Naive thymus-derived CD4-positive, alpha-beta T cell (primary cell): ENCODE measurements at regions of chr4 and their contacts with region 1.

Region 1: DNA sequence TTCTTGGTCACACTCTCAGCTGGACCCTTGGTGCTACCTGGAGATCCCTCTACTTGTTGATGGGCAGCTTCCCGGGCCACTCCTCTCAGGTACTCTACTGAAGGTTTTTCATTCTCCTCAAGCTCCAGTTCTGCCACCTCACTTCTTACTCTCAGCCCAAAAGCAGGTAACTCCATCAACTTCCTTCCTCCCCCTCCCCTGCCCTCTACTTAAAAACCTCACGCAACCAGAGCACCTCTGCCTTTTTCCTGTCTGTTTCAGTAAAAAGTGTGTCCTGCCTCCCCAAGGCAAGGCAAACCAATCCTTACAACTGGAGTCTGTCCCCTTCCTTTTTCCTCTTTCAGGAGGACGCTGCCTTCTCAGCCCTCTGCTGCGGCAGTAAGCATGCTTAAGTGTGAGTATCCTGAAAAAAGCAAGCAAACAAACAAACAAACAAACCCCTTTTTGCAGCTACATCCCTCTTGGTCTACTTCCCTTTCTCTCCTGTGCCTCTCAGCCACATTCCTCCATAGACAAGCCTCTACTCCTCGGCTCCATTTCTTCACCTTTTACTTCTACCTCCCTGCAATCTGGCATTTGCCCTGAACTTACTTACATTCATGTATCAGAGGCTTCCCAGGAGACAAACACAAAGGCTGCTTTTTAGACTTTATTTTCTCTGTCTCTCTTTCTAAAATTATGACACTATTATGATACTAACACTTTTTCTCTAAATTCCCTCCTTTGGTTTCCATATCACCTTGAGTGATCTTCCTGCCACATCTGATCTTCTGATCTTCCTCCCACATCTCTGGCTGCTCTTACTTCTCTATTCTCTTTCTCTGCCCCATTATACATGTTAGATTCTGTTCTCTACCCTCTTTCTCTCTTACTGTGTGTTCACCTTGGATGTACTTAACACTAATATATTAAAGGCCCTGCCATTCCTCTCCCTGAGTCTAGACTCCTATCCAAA is 5.4 kb downstream of the ALPK1 start:
- DNase-seq: peak in 2 of 9 donors; percentile 30 to 33
- ATAC-seq: peak; percentile 71
- H3K4me3 ChIP-seq: no peak overlapping the region
- H3K4me3 Mint-ChIP-seq: no peak overlapping the region
- H3K27ac ChIP-seq: peak overlapping the region; percentile 52
- H3K27ac Mint-ChIP-seq: no peak overlapping the region
- H3K4me1 ChIP-seq: peaks cover 12 to 40% of the 10 kb centered on the region in 2 donors
- H3K4me1 Mint-ChIP-seq: peaks cover 10 to 35% (median 31%) of the 10 kb centered on the region in 7 donors
- H3K27me3 ChIP-seq: no peaks in the 10 kb centered on the region
- H3K27me3 Mint-ChIP-seq: no peaks in the 10 kb centered on the region

Region 2: GRCh38 chr4:112321776-112322684 is 19.4 kb after region 1 on chr4:
- CTCF ChIA-PET with region 1: interaction called, 4 read pairs
- POLR2A ChIA-PET with region 1: no interaction called
- intact Hi-C with region 1: loop called (anchors 1 kb)
- DNase-seq: peak; percentile 44 to 74 (median 71)
- ATAC-seq: peak; percentile 96
- H3K4me3 ChIP-seq: no peak overlapping the region
- H3K4me3 Mint-ChIP-seq: peak overlapping the region in 7 of 10 donors; percentile 27 to 75 (median 62)
- H3K27ac ChIP-seq: no peak overlapping the region
- H3K27ac Mint-ChIP-seq: peak overlapping the region in 3 of 9 donors; percentile 15 to 59 (median 38)
- H3K4me1 ChIP-seq: no peaks in the 10 kb centered on the region
- H3K4me1 Mint-ChIP-seq: peaks cover 10 to 34% (median 14%) of the 10 kb centered on the region in 7 donors
- H3K27me3 ChIP-seq: no peaks in the 10 kb centered on the region
- H3K27me3 Mint-ChIP-seq: no peaks in the 10 kb centered on the region